Naive thymus-derived CD4-positive, alpha-beta T cell (primary cell): ENCODE measurements at regions of chr3 and their contacts with region 1.

Region 1: GRCh38 chr3:169668957-169669681 is 5.6 kb upstream of the MECOM start:
- DNase-seq: peak in 1 of 9 donors; percentile 55
- ATAC-seq: peak; percentile 68
- H3K4me3 ChIP-seq: no peak overlapping the region
- H3K4me3 Mint-ChIP-seq: peak overlapping the region; percentile 40 to 81 (median 69)
- H3K27ac ChIP-seq: no peak overlapping the region
- H3K27ac Mint-ChIP-seq: no peak overlapping the region
- H3K4me1 ChIP-seq: peaks cover 0 to under 1% of the 10 kb centered on the region in 2 donors
- H3K4me1 Mint-ChIP-seq: peaks cover 6 to 37% (median 24%) of the 10 kb centered on the region in 7 donors
- H3K27me3 ChIP-seq: peaks cover 10 to 52% of the 10 kb centered on the region in 2 donors
- H3K27me3 Mint-ChIP-seq: peaks cover 81 to 99% (median 92%) of the 10 kb centered on the region in 5 donors

Region 2: GRCh38 chr3:167830007-167830406 is 1839.1 kb before region 1 on chr3:
- CTCF ChIA-PET with region 1: no interaction called
- POLR2A ChIA-PET with region 1: no interaction called
- intact Hi-C with region 1: no loop called
- DNase-seq: no peak
- ATAC-seq: no peak
- H3K4me3 ChIP-seq: no peak overlapping the region
- H3K4me3 Mint-ChIP-seq: no peak overlapping the region
- H3K27ac ChIP-seq: no peak overlapping the region
- H3K27ac Mint-ChIP-seq: no peak overlapping the region
- H3K4me1 ChIP-seq: no peaks in the 10 kb centered on the region
- H3K4me1 Mint-ChIP-seq: no peaks in the 10 kb centered on the region
- H3K27me3 ChIP-seq: no peaks in the 10 kb centered on the region
- H3K27me3 Mint-ChIP-seq: peaks cover 0 to 12% (median 0%) of the 10 kb centered on the region in 5 donors

Region 3: DNA sequence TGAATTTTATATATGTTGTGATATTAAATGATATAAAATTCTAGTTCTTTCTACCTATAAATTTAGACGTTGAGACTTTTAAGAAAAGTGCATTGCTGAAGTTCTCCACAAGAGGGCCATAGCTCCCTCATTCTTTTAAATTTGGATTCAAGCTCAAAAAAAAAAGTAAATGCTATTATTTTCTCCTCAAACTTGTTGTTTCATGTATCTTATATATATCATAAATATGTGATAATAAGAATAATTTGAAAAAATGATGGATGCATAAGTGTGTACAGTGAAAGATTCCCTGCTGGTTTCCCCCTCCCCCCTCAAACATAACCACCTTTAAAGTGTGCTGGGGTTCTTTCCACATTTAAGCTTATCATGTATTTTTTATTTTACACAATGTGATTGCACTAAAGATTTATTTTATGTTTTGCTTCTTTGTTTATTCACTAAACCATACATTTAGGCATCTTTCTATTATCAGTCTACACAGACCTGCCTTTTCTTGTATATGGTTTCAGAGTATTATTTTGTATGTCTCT is 804.0 kb before region 1 on chr3:
- CTCF ChIA-PET with region 1: no interaction called
- POLR2A ChIA-PET with region 1: no interaction called
- intact Hi-C with region 1: loop called (anchors 5 to 10 kb)
- DNase-seq: no peak
- ATAC-seq: no peak
- H3K4me3 ChIP-seq: no peak overlapping the region
- H3K4me3 Mint-ChIP-seq: no peak overlapping the region
- H3K27ac ChIP-seq: no peak overlapping the region
- H3K27ac Mint-ChIP-seq: no peak overlapping the region
- H3K4me1 ChIP-seq: no peaks in the 10 kb centered on the region
- H3K4me1 Mint-ChIP-seq: peaks cover 0 to 1% (median 0%) of the 10 kb centered on the region in 7 donors
- H3K27me3 ChIP-seq: no peaks in the 10 kb centered on the region
- H3K27me3 Mint-ChIP-seq: no peaks in the 10 kb centered on the region

Region 4: GRCh38 chr3:169149349-169149890 is 519.7 kb before region 1 on chr3:
- CTCF ChIA-PET with region 1: no interaction called
- POLR2A ChIA-PET with region 1: no interaction called
- intact Hi-C with region 1: loop called in 1 of 2 experiments (anchors 1 kb)
- DNase-seq: peak; percentile 33 to 77 (median 52)
- ATAC-seq: peak; percentile 87
- H3K4me3 ChIP-seq: no peak overlapping the region
- H3K4me3 Mint-ChIP-seq: peak overlapping the region in 6 of 10 donors; percentile 12 to 71 (median 44)
- H3K27ac ChIP-seq: no peak overlapping the region
- H3K27ac Mint-ChIP-seq: peak overlapping the region in 1 of 9 donors; percentile 33
- H3K4me1 ChIP-seq: peaks cover 7 to 9% of the 10 kb centered on the region in 2 donors
- H3K4me1 Mint-ChIP-seq: peaks cover 13 to 32% (median 23%) of the 10 kb centered on the region in 7 donors
- H3K27me3 ChIP-seq: peaks cover 5 to 29% of the 10 kb centered on the region in 2 donors
- H3K27me3 Mint-ChIP-seq: peaks cover 70 to 77% (median 72%) of the 10 kb centered on the region in 5 donors

Region 5: GRCh38 chr3:169562992-169563774 is 105.9 kb before region 1 on chr3:
- CTCF ChIA-PET with region 1: no interaction called
- POLR2A ChIA-PET with region 1: no interaction called
- intact Hi-C with region 1: loop called in 1 of 2 experiments (anchors 2 kb)
- DNase-seq: peak in 1 of 9 donors; percentile 1
- ATAC-seq: no peak
- H3K4me3 ChIP-seq: no peak overlapping the region
- H3K4me3 Mint-ChIP-seq: no peak overlapping the region
- H3K27ac ChIP-seq: no peak overlapping the region
- H3K27ac Mint-ChIP-seq: no peak overlapping the region
- H3K4me1 ChIP-seq: no peaks in the 10 kb centered on the region
- H3K4me1 Mint-ChIP-seq: no peaks in the 10 kb centered on the region
- H3K27me3 ChIP-seq: no peaks in the 10 kb centered on the region
- H3K27me3 Mint-ChIP-seq: peaks cover 0 to 19% (median 5%) of the 10 kb centered on the region in 5 donors